Caco-2 (cell line): ENCODE measurements at regions of chr10 and their contacts with region 1.

Region 1: GRCh38 chr10:28883741-28884437 is 206.6 kb downstream of the BAMBI start:
- DNase-seq: no peak
- H3K4me3 ChIP-seq: no peak overlapping the region
- H3K4me3 Mint-ChIP-seq: no peak overlapping the region
- H3K27ac Mint-ChIP-seq: peak overlapping the region; percentile 35
- H3K4me1 ChIP-seq: peaks cover 44% of the 10 kb centered on the region
- H3K4me1 Mint-ChIP-seq: peaks cover 52% of the 10 kb centered on the region
- H3K27me3 ChIP-seq: no peaks in the 10 kb centered on the region
- H3K27me3 Mint-ChIP-seq: no peaks in the 10 kb centered on the region
- CTCF ChIP-seq: no peak

Region 2: GRCh38 chr10:28897617-28898464 is 14.0 kb after region 1 on chr10:
- CTCF ChIA-PET with region 1: no interaction called
- POLR2A ChIA-PET with region 1: no interaction called
- intact Hi-C with region 1: no loop called
- DNase-seq: no peak
- H3K4me3 ChIP-seq: no peak overlapping the region
- H3K4me3 Mint-ChIP-seq: no peak overlapping the region
- H3K27ac Mint-ChIP-seq: peak overlapping the region; percentile 21
- H3K4me1 ChIP-seq: no peaks in the 10 kb centered on the region
- H3K4me1 Mint-ChIP-seq: peaks cover 5% of the 10 kb centered on the region
- H3K27me3 ChIP-seq: no peaks in the 10 kb centered on the region
- H3K27me3 Mint-ChIP-seq: no peaks in the 10 kb centered on the region
- CTCF ChIP-seq: no peak

Region 3: GRCh38 chr10:28913436-28914237 is 29.7 kb after region 1 on chr10:
- CTCF ChIA-PET with region 1: no interaction called
- POLR2A ChIA-PET with region 1: no interaction called
- intact Hi-C with region 1: loop called (anchors 1 kb)
- DNase-seq: peak; percentile 70 to 89
- H3K4me3 ChIP-seq: no peak overlapping the region
- H3K4me3 Mint-ChIP-seq: peak overlapping the region; percentile 25
- H3K27ac Mint-ChIP-seq: peak overlapping the region; percentile 83
- H3K4me1 ChIP-seq: peaks cover 41% of the 10 kb centered on the region
- H3K4me1 Mint-ChIP-seq: peaks cover 45% of the 10 kb centered on the region
- H3K27me3 ChIP-seq: no peaks in the 10 kb centered on the region
- H3K27me3 Mint-ChIP-seq: no peaks in the 10 kb centered on the region
- CTCF ChIP-seq: no peak